ENCODE measurements at regions of chr2 and their contacts with region 1.

Region 1: GRCh38 chr2:1898461-1899395 is 154.4 kb upstream of the PXDN start:
- DNase-seq: no peak
- ATAC-seq: peak in 1 of 4 donors; percentile 57
- H3K4me3 ChIP-seq: no peak overlapping the region
- H3K27ac ChIP-seq: no peak overlapping the region
- H3K4me1 ChIP-seq: peaks cover 0 to 5% (median 0%) of the 10 kb centered on the region in 12 donors
- H3K27me3 ChIP-seq: no peaks in the 10 kb centered on the region
- CTCF ChIP-seq: no peak
- POLR2A ChIP-seq: no peak

Region 2: GRCh38 chr2:2121887-2122286 is 223.2 kb after region 1 on chr2:
- intact Hi-C with region 1: loop called in 2 of 10 experiments (anchors 5 to 10 kb)
- DNase-seq: no peak
- ATAC-seq: no peak
- H3K4me3 ChIP-seq: no peak overlapping the region
- H3K27ac ChIP-seq: no peak overlapping the region
- H3K4me1 ChIP-seq: peaks cover 0 to 3% (median 0%) of the 10 kb centered on the region in 12 donors
- H3K27me3 ChIP-seq: no peaks in the 10 kb centered on the region
- CTCF ChIP-seq: no peak
- POLR2A ChIP-seq: no peak